Ascending aorta (tissue), 2 donors: ENCODE measurements at regions of chr11 and their contacts with region 1.

Region 1: GRCh38 chr11:5791165-5791564 is at the start of gene OR52N1:
- DNase-seq: no peak
- H3K4me3 ChIP-seq: no peak within 1 kb of the TSS
- H3K27ac ChIP-seq: no peak within 1 kb of the TSS
- H3K4me1 ChIP-seq: no peaks in the 10 kb centered on the region
- H3K27me3 ChIP-seq: no peaks in the 10 kb centered on the region
- CTCF ChIP-seq: no peak
- total RNA-seq, gene OR52N1: not detected

Region 2: DNA sequence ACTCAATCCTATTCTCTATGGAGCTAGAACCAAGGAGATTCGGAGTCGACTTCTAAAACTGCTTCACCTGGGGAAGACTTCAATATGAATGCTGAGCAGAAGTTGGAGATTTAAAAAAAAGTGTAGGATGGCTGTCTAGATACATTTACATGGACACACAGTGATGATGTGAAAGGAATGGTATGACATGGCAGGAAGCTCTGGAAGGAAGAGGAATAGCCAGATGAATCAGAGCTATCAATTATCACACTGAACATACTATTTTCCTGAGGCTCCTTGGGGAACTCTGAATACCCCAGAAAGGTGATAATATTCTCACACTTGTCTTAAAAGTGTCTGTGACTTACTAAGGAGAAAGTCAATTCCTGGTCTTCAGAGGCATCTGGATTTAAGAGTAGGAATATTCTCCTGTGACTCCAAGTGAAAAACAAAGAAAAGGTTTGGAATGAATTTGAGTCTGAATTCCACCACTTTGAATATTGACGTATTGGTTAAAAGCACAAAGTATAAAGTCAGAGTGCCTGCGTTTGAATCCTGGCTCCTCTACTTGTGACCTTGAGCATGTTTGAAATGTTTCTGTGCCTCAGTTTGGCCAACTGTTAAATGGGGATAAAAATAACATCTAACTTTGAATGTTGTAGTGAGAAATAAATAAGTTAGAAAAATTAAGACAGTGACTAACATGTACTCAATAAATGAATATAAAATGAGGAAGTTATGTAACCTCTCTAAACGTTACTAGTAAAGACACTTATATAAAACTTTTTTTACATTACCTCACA is 301.4 kb before region 1 on chr11:
- intact Hi-C with region 1: no loop called
- DNase-seq: no peak
- H3K4me3 ChIP-seq: no peak overlapping the region
- H3K27ac ChIP-seq: no peak overlapping the region
- H3K4me1 ChIP-seq: no peaks in the 10 kb centered on the region
- H3K27me3 ChIP-seq: no peaks in the 10 kb centered on the region
- CTCF ChIP-seq: no peak

Region 3: DNA sequence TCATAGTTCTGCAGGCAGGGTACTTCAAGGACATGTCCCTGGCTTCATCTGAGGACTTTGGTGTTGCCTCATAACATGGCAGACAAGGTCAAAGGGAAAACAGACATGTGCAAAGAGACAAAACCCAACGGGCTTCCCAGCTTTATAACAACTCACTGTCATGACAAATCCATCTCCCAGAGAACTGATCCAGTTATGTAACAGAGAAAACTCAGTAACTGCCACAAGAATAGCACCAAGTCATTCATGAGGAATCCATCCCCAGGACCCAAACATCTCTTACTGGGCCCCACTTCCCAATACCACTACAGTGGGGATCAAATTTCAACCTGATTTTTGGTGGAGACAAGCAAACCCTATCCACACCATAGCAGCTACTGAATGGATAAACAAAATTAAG is 24.1 kb before region 1 on chr11:
- intact Hi-C with region 1: loop called (anchors 1 kb)
- DNase-seq: no peak
- H3K4me3 ChIP-seq: no peak overlapping the region
- H3K27ac ChIP-seq: no peak overlapping the region
- H3K4me1 ChIP-seq: no peaks in the 10 kb centered on the region
- H3K27me3 ChIP-seq: no peaks in the 10 kb centered on the region
- CTCF ChIP-seq: no peak